ENCODE measurements at regions of chr7 and their contacts with region 1.

Region 1: DNA sequence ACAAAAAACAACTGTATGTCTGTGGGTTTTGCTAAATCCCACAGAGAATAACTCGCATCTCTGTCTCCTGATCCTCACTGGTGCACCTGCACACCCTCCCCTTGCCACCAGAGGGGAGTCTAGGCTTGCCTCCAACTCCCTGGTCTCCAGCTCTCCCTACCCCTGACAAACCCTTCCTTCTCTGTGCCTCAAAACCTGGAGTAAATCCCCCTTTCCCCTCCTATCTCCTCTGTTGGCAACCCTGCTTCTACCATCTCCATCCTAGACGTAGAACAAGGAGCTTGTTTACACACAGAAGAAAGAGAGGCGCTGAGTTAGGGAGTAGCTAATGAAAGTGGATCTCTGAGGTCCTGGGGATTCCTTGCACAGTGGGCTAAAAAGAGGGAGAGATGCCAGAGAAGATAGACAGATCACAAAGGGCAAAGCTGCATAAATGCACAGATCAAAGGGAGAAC is 6.0 kb downstream of the MBLAC1 start:
- DNase-seq: peak; percentile 66
- ATAC-seq: peak; percentile 77
- H3K4me3 ChIP-seq: no peak overlapping the region
- H3K27ac ChIP-seq: no peak overlapping the region
- H3K4me1 ChIP-seq: peaks cover 2% of the 10 kb centered on the region; the same call in 1 of the 2 replicates
- H3K27me3 ChIP-seq: peaks cover 2% of the 10 kb centered on the region; the same call in 1 of the 2 replicates
- CTCF ChIP-seq: peak; percentile 94
- POLR2A ChIP-seq: no peak
- RAD21 ChIP-seq: peak; percentile 96

Region 2: DNA sequence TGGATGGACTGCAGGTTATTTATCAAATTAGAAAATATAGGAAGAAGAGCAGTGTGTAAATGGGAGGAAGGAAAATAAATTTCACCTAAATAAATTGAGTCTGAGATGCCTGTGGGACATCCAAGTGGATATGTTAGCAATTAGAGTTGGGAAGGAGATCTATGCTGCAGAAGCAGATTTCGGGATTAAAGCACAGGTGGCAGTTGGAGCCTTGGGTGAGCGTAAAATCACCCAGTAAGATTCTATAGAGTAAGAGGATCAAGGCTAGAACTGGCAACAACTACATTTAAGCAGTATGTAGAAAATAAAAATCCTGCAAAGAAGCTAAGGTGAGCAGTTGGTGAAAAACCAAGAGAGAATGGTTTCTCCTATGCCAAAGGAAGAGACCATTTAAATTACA is 221.7 kb before region 1 on chr7:
- CTCF ChIA-PET with region 1: no interaction called
- POLR2A ChIA-PET with region 1: no interaction called
- dilution Hi-C with region 1: no loop called
- in situ Hi-C with region 1: no loop called
- intact Hi-C with region 1: loop called (anchors 5 kb)
- DNase-seq: no peak
- ATAC-seq: no peak
- H3K4me3 ChIP-seq: no peak overlapping the region
- H3K27ac ChIP-seq: no peak overlapping the region
- H3K4me1 ChIP-seq: peaks cover 2% of the 10 kb centered on the region; the same call in 1 of the 2 replicates
- H3K27me3 ChIP-seq: no peaks in the 10 kb centered on the region
- CTCF ChIP-seq: no peak
- POLR2A ChIP-seq: no peak
- RAD21 ChIP-seq: no peak

Region 3: DNA sequence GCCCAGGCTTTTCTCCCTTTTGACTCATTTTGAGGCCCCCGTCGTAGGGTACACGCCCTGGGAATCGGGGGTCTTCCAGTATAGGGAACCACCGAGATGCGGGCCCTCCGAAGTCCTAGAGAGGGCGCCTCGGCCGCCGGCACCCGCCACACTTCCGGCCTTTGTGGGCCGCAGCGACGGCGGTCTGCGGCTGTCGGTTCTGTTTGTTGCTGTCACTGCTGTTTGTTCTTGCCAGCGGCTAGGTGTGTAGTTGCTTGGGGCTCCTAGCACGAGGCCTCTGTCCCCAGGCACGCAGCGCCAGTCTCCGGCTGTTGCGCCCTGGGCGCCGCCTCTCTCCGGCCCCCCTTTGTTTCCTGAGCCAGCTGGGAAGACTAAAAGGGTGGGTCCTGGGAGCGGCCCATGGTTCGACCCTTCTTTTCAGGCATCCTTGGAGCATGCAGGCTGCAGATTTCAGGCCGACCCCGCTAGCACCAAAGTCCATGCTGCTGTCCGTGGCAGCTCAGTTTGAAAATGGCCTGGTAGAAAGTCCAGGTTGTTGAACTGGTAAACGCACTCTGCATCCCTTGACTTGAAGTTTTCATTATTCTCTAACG is 135.1 kb before region 1 on chr7:
- CTCF ChIA-PET with region 1: no interaction called
- POLR2A ChIA-PET with region 1: no interaction called
- dilution Hi-C with region 1: no loop called
- in situ Hi-C with region 1: no loop called
- intact Hi-C with region 1: loop called (anchors 2 kb)
- DNase-seq: no peak
- ATAC-seq: peak; percentile 46
- H3K4me3 ChIP-seq: peak overlapping the region; percentile 39; the same call in 1 of the 2 replicates
- H3K27ac ChIP-seq: no peak overlapping the region
- H3K4me1 ChIP-seq: peaks cover 1% of the 10 kb centered on the region; the same call in 1 of the 2 replicates
- H3K27me3 ChIP-seq: peaks cover 5% of the 10 kb centered on the region
- CTCF ChIP-seq: no peak
- POLR2A ChIP-seq: no peak
- RAD21 ChIP-seq: no peak

Region 4: DNA sequence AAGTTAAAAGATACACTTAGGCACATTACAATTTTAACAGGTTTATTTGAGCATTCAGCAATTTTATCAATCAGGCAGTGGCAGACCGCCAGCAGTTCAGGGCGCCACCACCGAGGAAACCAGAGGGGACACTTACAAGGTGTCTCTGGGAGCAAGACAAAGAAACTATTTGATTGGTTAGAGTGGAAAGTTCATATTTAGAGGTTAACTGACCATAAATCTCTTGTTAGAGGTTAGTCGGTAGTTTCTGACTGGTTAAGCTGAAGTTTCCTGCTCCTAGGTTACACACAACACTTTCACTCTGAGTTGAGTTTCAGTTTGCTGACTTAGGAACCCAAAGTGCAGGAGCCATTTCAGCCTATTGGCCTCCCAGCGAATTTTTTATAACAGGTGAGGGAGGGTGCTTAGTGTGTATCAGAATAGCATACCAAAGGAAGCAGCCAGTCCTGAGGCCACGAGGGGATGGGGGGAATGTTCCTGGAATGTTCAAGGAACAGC is 76.2 kb after region 1 on chr7:
- CTCF ChIA-PET with region 1: no interaction called
- POLR2A ChIA-PET with region 1: no interaction called
- dilution Hi-C with region 1: no loop called
- in situ Hi-C with region 1: loop called (anchors 5 kb)
- intact Hi-C with region 1: loop called (anchors 2 kb)
- DNase-seq: no peak
- ATAC-seq: no peak
- H3K4me3 ChIP-seq: no peak overlapping the region
- H3K27ac ChIP-seq: no peak overlapping the region
- H3K4me1 ChIP-seq: no peaks in the 10 kb centered on the region
- H3K27me3 ChIP-seq: no peaks in the 10 kb centered on the region; the same call in 1 of the 2 replicates
- CTCF ChIP-seq: no peak
- POLR2A ChIP-seq: no peak
- RAD21 ChIP-seq: no peak

Region 5: DNA sequence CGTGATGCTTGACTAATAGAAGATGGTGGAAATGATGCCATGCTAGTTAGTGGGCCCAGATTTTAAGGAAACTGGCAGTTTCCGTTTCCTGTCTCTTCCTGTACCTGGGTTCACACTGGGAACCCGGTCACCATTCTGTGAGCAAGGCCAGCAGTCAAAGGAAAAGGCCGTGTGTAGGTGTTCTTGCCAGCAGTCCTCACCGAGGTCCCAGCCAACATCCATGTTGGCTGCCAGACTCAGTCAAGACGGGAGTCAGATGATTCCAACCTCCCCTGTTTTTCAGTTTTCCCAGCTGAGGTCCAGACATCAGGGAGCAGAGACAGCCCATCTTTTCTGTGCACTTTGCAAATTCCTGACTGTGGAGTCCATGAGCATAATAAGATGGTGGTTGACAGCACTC is 210.0 kb after region 1 on chr7:
- CTCF ChIA-PET with region 1: no interaction called
- POLR2A ChIA-PET with region 1: no interaction called
- dilution Hi-C with region 1: no loop called
- in situ Hi-C with region 1: loop called (anchors 10 kb)
- intact Hi-C with region 1: loop called (anchors 1 kb)
- DNase-seq: no peak
- ATAC-seq: no peak
- H3K4me3 ChIP-seq: no peak overlapping the region
- H3K27ac ChIP-seq: no peak overlapping the region
- H3K4me1 ChIP-seq: peaks cover 4% of the 10 kb centered on the region
- H3K27me3 ChIP-seq: no peaks in the 10 kb centered on the region
- CTCF ChIP-seq: no peak
- POLR2A ChIP-seq: no peak
- RAD21 ChIP-seq: no peak

Region 6: DNA sequence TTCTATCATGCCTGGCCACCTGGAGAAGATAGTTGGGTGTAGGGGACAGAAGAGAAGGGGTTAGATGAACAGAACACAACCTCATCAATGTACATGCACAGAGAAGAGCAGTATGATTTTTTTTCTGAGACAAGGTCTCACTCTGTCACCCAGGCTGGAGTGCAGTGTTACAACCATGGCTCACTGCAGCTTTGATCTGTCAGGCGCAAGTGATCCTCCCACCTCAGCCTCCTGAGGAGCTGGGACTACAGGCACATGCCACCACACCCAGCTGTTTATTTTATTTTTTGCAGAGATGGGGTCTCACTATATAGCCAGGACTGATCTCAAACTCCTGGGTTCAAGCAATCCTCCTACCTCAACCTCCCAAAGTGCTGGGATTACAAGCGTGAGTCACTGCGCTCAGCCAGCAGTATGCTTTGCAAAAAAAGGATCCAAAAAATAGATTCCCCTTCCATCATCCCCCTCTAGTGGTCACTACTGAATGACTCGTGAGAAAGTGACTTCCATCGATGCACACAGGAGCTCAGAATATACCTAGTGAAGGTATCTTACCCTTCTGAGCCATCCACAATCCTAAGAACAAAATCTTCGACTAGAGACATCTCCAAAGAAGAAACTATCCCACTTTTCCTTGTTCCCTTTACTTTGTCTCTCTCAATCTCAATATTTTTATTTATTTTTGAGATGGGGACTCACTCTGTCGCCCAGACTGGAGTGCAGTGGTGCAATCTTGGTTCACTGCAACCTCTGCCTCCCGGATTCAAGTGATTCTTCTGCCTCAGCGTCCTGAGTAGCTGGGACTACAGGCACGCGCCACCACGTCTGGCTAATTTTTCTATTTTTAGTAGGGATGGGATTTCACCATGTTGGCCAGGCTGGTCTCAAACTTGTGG is 274.8 kb after region 1 on chr7:
- CTCF ChIA-PET with region 1: interaction called, 3 read pairs
- POLR2A ChIA-PET with region 1: no interaction called
- dilution Hi-C with region 1: no loop called
- in situ Hi-C with region 1: no loop called
- intact Hi-C with region 1: loop called (anchors 2 kb)
- DNase-seq: peak; percentile 81
- ATAC-seq: peak; percentile 98
- H3K4me3 ChIP-seq: no peak overlapping the region
- H3K27ac ChIP-seq: no peak overlapping the region
- H3K4me1 ChIP-seq: no peaks in the 10 kb centered on the region; the same call in 1 of the 2 replicates
- H3K27me3 ChIP-seq: peaks cover 45% of the 10 kb centered on the region
- CTCF ChIP-seq: peak; percentile 75
- POLR2A ChIP-seq: no peak
- RAD21 ChIP-seq: peak; percentile 73

Measured in IMR-90 (cell line).